Sciatic nerve (tissue), 2 donors: ENCODE measurements at regions of chr3 and their contacts with region 1.

Region 1: GRCh38 chr3:164018500-164018899 is 1059.8 kb downstream of the SI start:
- DNase-seq: no peak
- ATAC-seq: no peak

Region 2: GRCh38 chr3:164080208-164080607 is 61.7 kb after region 1 on chr3:
- intact Hi-C with region 1: no loop called
- DNase-seq: no peak
- ATAC-seq: no peak

Region 3: GRCh38 chr3:165156757-165157420 is 1138.4 kb after region 1 on chr3:
- intact Hi-C with region 1: loop called (anchors 5 kb)
- DNase-seq: no peak
- ATAC-seq: no peak